Ascending aorta (tissue), 2 donors: ENCODE measurements at regions of chr10 and their contacts with region 1.

Region 1: GRCh38 chr10:86399879-86400704 is 33.5 kb upstream of the GRID1 start:
- DNase-seq: peak; percentile 68 to 97
- H3K4me3 ChIP-seq: peak overlapping the region; percentile 75 to 92
- H3K27ac ChIP-seq: peak overlapping the region; percentile 90 to 96
- H3K4me1 ChIP-seq: peaks cover 10 to 16% of the 10 kb centered on the region in 2 donors
- H3K27me3 ChIP-seq: no peaks in the 10 kb centered on the region
- CTCF ChIP-seq: peak; percentile 94 to 98 (median 97)

Region 2: GRCh38 chr10:86439544-86439943 is 39.5 kb after region 1 on chr10:
- intact Hi-C with region 1: loop called (anchors 5 kb)
- DNase-seq: peak; percentile 67 to 86
- H3K4me3 ChIP-seq: no peak overlapping the region
- H3K27ac ChIP-seq: peak overlapping the region in 1 of 2 donors; percentile 45
- H3K4me1 ChIP-seq: no peaks in the 10 kb centered on the region
- H3K27me3 ChIP-seq: no peaks in the 10 kb centered on the region
- CTCF ChIP-seq: no peak

Region 3: GRCh38 chr10:86585037-86585725 is 185.1 kb after region 1 on chr10:
- intact Hi-C with region 1: loop called (anchors 1 kb)
- DNase-seq: peak in 1 of 2 donors; percentile 79
- H3K4me3 ChIP-seq: no peak overlapping the region
- H3K27ac ChIP-seq: no peak overlapping the region
- H3K4me1 ChIP-seq: peaks cover 0 to 3% of the 10 kb centered on the region in 2 donors
- H3K27me3 ChIP-seq: no peaks in the 10 kb centered on the region
- CTCF ChIP-seq: peak; percentile 90 to 96 (median 96)

Region 4: GRCh38 chr10:86668297-86669165 is 268.4 kb after region 1 on chr10 and contains the start of gene LDB3:
- intact Hi-C with region 1: loop called (anchors 5 kb)
- DNase-seq: peak; percentile 65 to 93
- H3K4me3 ChIP-seq: peak within 1 kb of the TSS; percentile 46 to 74
- H3K27ac ChIP-seq: peak within 1 kb of the TSS; percentile 92
- H3K4me1 ChIP-seq: peaks cover 14 to 48% of the 10 kb centered on the region in 2 donors
- H3K27me3 ChIP-seq: no peaks in the 10 kb centered on the region
- CTCF ChIP-seq: no peak
- total RNA-seq, gene LDB3: 27.4 TPM